Activated CD8-positive, alpha-beta T cell treated with anti-CD3 and anti-CD28 coated beads, Interleukin-2, amount 10 ng/mL, durations not matched to agents 7 days and 5 days (primary cell): ENCODE measurements at regions of chr9 and their contacts with region 1.

Region 1: GRCh38 chr9:20622330-20623020 is at the start of gene MLLT3:
- DNase-seq: peak; percentile 98
- ATAC-seq: peak; percentile 84
- H3K4me3 Mint-ChIP-seq: peak within 1 kb of the TSS; percentile 94
- H3K27ac Mint-ChIP-seq: peak within 1 kb of the TSS; percentile 94
- H3K4me1 Mint-ChIP-seq: peaks cover 39% of the 10 kb centered on the region
- H3K27me3 Mint-ChIP-seq: peaks cover under 1% of the 10 kb centered on the region
- total RNA-seq, gene MLLT3: 112 to 114 TPM

Region 2: GRCh38 chr9:20319641-20320337 is 302.7 kb before region 1 on chr9:
- CTCF ChIA-PET with region 1: interaction called, 3 read pairs
- POLR2A ChIA-PET with region 1: interaction called, 11 read pairs
- DNase-seq: peak; percentile 45
- ATAC-seq: peak; percentile 60
- H3K4me3 Mint-ChIP-seq: no peak overlapping the region
- H3K27ac Mint-ChIP-seq: peak overlapping the region; percentile 78
- H3K4me1 Mint-ChIP-seq: peaks cover 96% of the 10 kb centered on the region
- H3K27me3 Mint-ChIP-seq: no peaks in the 10 kb centered on the region

Region 3: GRCh38 chr9:20552874-20553575 is 69.5 kb before region 1 on chr9:
- CTCF ChIA-PET with region 1: interaction called, 16 read pairs
- POLR2A ChIA-PET with region 1: interaction called, 15 read pairs
- DNase-seq: peak; percentile 37
- ATAC-seq: peak; percentile 74
- H3K4me3 Mint-ChIP-seq: peak overlapping the region; percentile 38
- H3K27ac Mint-ChIP-seq: peak overlapping the region; percentile 82
- H3K4me1 Mint-ChIP-seq: peaks cover 81% of the 10 kb centered on the region
- H3K27me3 Mint-ChIP-seq: no peaks in the 10 kb centered on the region

Region 4: GRCh38 chr9:20604562-20604961 is 17.9 kb before region 1 on chr9:
- CTCF ChIA-PET with region 1: interaction called, 19 read pairs
- POLR2A ChIA-PET with region 1: interaction called, 20 read pairs
- DNase-seq: no peak
- ATAC-seq: peak; percentile 72
- H3K4me3 Mint-ChIP-seq: peak overlapping the region; percentile 48
- H3K27ac Mint-ChIP-seq: peak overlapping the region; percentile 34
- H3K4me1 Mint-ChIP-seq: peaks cover 68% of the 10 kb centered on the region
- H3K27me3 Mint-ChIP-seq: no peaks in the 10 kb centered on the region

Region 5: DNA sequence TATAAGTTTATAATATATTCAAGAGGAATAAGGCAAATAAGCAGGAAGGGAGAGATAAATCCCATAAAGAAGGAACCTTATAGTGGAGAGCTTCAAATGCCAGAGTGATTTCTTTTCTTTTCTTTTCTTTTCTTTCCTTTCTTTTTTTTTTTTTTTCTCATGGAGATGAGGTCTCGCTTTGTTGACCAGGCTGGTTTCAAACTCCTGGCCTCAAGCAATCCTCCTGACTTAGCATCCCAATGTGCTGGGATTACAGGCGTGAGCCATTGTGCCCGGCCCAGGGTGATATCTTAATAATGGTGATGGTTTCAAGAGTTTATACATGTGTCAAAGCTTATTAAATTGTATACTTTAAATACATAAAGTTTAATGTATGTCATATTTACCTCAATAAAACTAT is 42.0 kb after region 1 on chr9:
- CTCF ChIA-PET with region 1: no interaction called
- POLR2A ChIA-PET with region 1: no interaction called
- DNase-seq: no peak
- ATAC-seq: no peak
- H3K4me3 Mint-ChIP-seq: no peak overlapping the region
- H3K27ac Mint-ChIP-seq: no peak overlapping the region
- H3K4me1 Mint-ChIP-seq: no peaks in the 10 kb centered on the region
- H3K27me3 Mint-ChIP-seq: peaks cover 7% of the 10 kb centered on the region

Region 6: DNA sequence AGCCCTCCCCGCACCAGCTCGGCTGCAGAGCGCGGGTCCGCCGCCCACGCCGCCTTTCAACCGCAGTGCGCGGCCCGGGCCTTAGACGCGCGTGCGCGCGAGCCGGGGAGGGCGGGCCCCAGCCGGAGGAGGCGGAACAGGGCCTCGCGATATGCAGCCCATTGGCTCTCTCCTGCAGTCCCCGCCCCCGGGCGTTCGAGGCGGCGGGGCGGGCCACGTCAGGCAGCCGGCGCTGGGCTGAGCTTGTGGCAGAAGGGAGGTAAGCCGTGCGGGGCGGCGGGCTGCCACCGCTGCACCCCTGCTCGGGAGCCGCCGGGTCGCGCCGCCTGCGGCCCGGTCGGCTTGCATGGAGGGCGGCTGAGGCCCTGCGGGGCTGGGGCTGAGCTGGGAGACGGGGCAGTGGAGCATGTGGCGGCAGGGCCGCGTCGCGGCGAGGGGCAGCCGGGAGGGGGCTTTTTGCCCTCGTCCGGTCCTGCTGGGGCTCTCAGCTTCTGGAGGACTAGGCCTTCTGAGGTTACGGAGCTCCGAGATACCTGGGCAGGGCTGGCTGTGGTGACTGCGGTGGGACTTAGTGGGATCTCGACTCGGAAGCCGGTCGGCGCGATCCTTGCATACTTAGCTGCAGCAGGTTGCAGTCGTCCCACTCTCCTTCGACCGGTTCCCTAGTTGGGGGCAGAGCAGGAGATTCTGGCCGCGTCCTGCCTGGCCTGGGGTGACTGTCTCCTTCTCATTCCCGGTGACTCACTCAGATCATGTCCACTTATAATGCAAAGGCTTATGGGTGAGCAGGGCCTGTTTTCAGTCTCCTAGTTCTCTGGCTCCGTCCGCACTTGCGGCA is 61.8 kb after region 1 on chr9 and contains the start of gene FOCAD:
- CTCF ChIA-PET with region 1: interaction called, 14 read pairs
- POLR2A ChIA-PET with region 1: interaction called, 27 read pairs
- DNase-seq: peak; percentile 96
- ATAC-seq: peak; percentile 99
- H3K4me3 Mint-ChIP-seq: peak within 1 kb of the TSS; percentile 84
- H3K27ac Mint-ChIP-seq: peak within 1 kb of the TSS; percentile 82
- H3K4me1 Mint-ChIP-seq: peaks cover 20% of the 10 kb centered on the region
- H3K27me3 Mint-ChIP-seq: no peaks in the 10 kb centered on the region
- total RNA-seq, gene FOCAD: 31.5 to 32.8 TPM

Region 7: GRCh38 chr9:20941174-20941690 is 318.8 kb after region 1 on chr9:
- CTCF ChIA-PET with region 1: interaction called, 115 read pairs
- POLR2A ChIA-PET with region 1: no interaction called
- DNase-seq: peak; percentile 72
- ATAC-seq: peak; percentile 99
- H3K4me3 Mint-ChIP-seq: no peak overlapping the region
- H3K27ac Mint-ChIP-seq: peak overlapping the region; percentile 9
- H3K4me1 Mint-ChIP-seq: peaks cover 5% of the 10 kb centered on the region
- H3K27me3 Mint-ChIP-seq: no peaks in the 10 kb centered on the region